ENCODE measurements at regions of chr7 and their contacts with region 1.

Region 1: DNA sequence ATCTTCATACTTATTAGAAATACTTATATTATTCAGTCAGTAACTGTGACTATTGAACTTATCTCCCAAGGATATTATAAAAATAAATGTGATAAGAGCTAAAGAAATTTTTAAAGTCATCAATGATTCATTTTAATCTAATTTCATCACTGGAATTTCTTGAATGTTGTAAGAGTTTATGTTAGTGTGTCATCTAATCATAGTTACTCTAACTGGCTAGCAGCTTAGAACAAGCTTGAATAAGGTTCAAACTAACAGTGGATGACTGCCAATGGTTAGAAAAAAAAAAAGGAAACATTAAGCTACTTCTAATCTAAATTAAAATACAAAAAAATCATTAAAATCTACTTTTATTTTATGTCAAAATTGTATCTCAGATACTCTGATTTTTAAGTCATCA is 1066.3 kb downstream of the CNTNAP2 start:
- DNase-seq: no peak
- CTCF ChIP-seq: no peak

Region 2: GRCh38 chr7:146902728-146903127 is 280.1 kb before region 1 on chr7:
- CTCF ChIA-PET with region 1: no interaction called
- POLR2A ChIA-PET with region 1: no interaction called
- DNase-seq: no peak
- CTCF ChIP-seq: no peak

Region 3: DNA sequence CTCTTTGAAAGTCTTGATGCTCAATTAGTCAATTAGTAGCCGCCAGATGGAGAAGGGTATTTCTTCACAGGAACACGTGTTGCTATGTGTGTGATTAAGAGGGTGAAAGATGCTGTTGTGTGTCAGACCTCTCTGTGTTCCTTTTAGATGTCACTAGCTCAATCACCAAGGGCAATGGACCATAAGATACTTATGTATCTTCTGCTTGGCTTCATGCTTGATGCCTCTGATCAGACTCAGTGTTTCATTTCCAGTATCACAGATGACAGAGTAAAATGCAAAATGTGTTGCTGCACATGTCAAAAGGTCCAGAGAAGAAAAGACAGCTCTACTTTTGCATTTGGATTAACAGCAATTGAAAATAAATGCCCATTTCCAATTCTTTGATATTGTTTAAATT is 200.4 kb before region 1 on chr7:
- CTCF ChIA-PET with region 1: no interaction called
- POLR2A ChIA-PET with region 1: no interaction called
- DNase-seq: no peak
- CTCF ChIP-seq: no peak

Region 4: DNA sequence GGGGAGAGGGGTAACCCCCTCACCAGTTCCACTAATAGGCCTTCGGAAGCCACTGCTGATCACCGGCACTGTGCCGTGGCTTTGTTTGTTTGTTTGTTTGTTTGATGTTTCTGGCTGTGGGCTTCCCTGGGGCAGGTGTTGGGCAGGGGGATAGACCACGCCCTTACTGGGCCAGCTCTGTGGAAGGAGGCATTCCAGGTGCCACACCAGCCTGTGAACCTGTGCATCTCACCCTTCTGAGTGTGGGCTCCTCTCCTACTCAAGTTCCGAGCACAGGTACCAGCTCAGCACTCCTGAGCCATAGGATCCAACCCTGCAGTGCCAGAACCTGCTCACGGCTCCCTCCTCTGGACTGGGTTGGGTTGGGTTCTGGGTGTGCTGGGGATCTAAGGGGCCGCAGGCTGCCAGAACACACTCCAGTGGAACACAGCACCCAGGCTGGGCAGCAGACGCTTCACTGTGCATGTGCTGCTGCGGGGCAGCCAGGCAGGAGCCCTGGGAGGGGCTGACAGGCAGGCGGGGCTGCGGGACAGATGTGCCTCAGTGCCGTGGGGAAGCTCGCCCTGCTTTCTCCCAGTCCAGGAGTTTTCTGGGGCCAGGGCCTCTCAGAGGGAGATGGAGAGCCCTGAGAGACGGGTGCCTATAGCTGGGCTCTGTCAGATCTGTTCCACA is 12.4 kb before region 1 on chr7:
- CTCF ChIA-PET with region 1: interaction called, 10 read pairs
- POLR2A ChIA-PET with region 1: no interaction called
- DNase-seq: no peak
- CTCF ChIP-seq: no peak

Measured in GM10248 (cell line).